Lower lobe of right lung (tissue), 2 donors: ENCODE measurements at regions of chr18 and their contacts with region 1.

Region 1: DNA sequence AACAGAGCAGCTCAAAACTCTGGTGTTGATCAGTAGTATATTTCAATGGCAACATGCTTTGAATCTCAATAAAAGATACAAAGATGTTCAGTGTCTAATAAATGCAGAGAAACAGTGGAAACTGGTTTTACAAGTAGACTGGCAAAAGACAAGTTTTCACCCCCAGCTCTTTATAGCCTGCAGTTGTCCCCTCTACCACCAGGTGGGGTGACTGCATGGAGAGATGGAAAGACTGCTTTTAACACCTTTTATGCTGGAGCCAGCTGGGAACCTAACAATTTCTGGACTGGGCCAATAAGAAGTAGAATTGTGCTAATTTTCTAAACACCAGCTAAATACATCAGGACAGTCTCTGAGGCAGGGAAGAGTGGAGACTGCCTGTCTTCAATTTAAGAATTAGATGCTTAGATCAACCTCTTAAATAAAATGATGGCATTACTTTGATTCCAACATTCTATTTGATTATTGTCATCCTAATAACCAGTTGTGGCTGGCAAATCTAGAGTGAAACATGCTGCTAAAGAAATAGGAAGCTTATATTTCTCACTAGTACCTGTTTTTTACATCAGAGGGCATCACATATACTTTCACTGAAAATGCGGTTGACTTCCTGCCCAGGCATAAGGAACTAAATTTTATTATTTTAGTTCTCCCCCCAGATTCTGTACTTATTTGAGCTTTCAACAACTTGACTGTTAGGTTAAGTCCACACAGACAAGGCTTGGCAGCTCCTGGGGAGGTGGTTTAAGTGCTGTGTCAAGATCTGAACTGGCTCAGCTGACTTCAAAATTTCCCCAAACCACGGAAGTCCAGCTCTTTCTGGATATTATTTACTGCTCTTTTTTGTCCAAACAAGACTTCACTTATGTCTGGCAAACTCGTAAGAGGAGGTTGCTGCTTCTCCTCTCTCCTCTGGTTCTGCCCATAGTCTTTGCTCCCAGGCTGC is 140.5 kb downstream of the TPGS2 start:
- DNase-seq: no peak
- ATAC-seq: peak; percentile 77 to 86
- H3K4me3 ChIP-seq: no peak overlapping the region
- H3K27ac ChIP-seq: no peak overlapping the region
- H3K4me1 ChIP-seq: peaks cover 8% of the 10 kb centered on the region
- H3K27me3 ChIP-seq: no peaks in the 10 kb centered on the region
- CTCF ChIP-seq: peak; percentile 82

Region 2: DNA sequence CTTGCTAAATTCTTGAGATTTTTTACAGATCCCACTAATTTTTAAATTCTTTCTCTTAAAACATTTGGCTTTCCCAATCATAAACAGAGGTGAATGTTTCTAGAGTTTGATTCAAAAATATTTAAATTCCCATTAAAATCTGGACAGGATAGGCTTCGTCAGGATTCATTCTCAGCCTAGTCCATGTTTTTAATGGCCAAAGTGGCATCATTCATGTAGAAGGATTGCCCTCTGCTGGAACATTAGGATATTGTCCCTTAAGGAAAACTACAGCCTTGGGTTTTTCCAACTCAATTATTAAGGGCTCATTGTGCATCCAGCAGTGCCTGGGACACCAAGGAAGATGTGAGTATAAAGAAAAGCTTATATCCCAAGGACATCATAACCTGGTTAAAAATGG is 68.8 kb after region 1 on chr18:
- intact Hi-C with region 1: loop called (anchors 10 kb)
- DNase-seq: no peak
- ATAC-seq: peak; percentile 61 to 84
- H3K4me3 ChIP-seq: no peak overlapping the region
- H3K27ac ChIP-seq: no peak overlapping the region
- H3K4me1 ChIP-seq: peaks cover 8% of the 10 kb centered on the region
- H3K27me3 ChIP-seq: no peaks in the 10 kb centered on the region
- CTCF ChIP-seq: peak; percentile 66